Aorta (tissue), 5 donors: ENCODE measurements at regions of chr7 and their contacts with region 1.

Region 1: GRCh38 chr7:84302949-84303348 is 108.4 kb upstream of the SEMA3A start:
- DNase-seq: no peak
- ATAC-seq: no peak
- H3K4me3 ChIP-seq: no peak overlapping the region
- H3K27ac ChIP-seq: no peak overlapping the region
- H3K4me1 ChIP-seq: no peaks in the 10 kb centered on the region
- H3K27me3 ChIP-seq: no peaks in the 10 kb centered on the region

Region 2: GRCh38 chr7:84317536-84317935 is 14.6 kb after region 1 on chr7:
- intact Hi-C with region 1: loop called in 1 of 2 experiments (anchors 2 kb)
- DNase-seq: no peak
- ATAC-seq: no peak
- H3K4me3 ChIP-seq: no peak overlapping the region
- H3K27ac ChIP-seq: no peak overlapping the region
- H3K4me1 ChIP-seq: no peaks in the 10 kb centered on the region
- H3K27me3 ChIP-seq: no peaks in the 10 kb centered on the region